AG04449 (cell line): ENCODE measurements at regions of chr11 and their contacts with region 1.

Region 1: DNA sequence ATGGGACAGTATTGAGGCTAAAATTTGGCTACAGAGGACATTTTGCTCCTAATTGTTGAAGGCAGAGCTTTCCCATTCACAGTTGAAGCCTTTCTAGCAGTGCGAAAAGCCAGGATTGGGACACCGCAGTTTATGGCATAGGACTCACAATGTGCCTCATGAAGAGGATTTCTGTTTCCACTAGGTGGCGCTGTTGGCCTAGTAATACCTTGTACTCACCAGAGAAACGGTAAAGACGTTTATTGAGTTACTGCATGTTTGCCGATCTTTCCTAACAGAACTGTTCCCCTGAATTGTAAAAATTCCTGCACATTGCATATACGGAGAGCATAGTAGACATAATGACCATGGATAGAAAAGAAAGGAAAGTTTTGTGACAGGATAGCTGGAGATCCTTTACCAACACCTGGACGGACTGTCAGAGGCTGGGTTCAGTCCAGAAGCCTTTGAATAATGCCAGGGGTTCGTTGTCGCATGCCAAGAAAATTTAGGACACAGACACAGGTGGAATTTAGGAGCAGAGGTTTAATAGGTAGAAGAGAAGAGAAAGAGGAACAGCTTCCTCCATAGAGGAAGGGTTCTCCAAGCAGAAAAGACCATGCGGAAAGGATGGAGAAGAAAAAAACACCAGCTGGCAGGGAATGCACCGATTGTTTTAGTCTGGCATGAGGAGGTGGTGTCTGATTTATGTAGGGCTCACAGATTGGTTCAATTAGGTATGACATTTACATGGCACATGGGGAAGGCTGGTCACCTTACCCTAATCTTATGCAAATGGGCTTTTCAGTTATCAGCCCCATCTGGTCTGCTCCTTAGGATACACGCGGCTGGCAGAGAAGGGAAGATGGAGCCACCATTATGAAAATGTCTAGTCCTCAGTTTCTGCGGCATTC is 10.8 kb upstream of the OR51D1 start:
- DNase-seq: peak; percentile 24
- H3K4me3 ChIP-seq: no peak overlapping the region
- CTCF ChIP-seq: peak; percentile 62

Region 2: GRCh38 chr11:4665424-4665823 is 39.0 kb after region 1 on chr11:
- CTCF ChIA-PET with region 1: no interaction called
- POLR2A ChIA-PET with region 1: no interaction called
- DNase-seq: peak; percentile 14
- H3K4me3 ChIP-seq: no peak overlapping the region
- CTCF ChIP-seq: no peak

Region 3: GRCh38 chr11:4826425-4826824 is 200.0 kb after region 1 on chr11:
- CTCF ChIA-PET with region 1: interaction called, 15 read pairs
- POLR2A ChIA-PET with region 1: no interaction called
- DNase-seq: peak; percentile 24
- H3K4me3 ChIP-seq: no peak overlapping the region
- CTCF ChIP-seq: peak; percentile 19

Region 4: GRCh38 chr11:5004424-5005274 is 378.2 kb after region 1 on chr11:
- CTCF ChIA-PET with region 1: interaction called, 13 read pairs
- POLR2A ChIA-PET with region 1: no interaction called
- DNase-seq: peak; percentile 5
- H3K4me3 ChIP-seq: no peak overlapping the region
- CTCF ChIP-seq: peak; percentile 55